ENCODE measurements at regions of chr10 and their contacts with region 1.

Region 1: GRCh38 chr10:20004087-20004523 is 187.9 kb downstream of the PLXDC2 start:
- DNase-seq: peak; percentile 90 to 92 (median 91)
- H3K4me3 ChIP-seq: peak overlapping the region in 2 of 3 experiments; percentile 25 to 47
- H3K4me3 Mint-ChIP-seq: peak overlapping the region; percentile 27 to 66
- H3K27ac ChIP-seq: peak overlapping the region; percentile 97 to 100
- H3K27ac Mint-ChIP-seq: peak overlapping the region; percentile 93 to 99 (median 98)
- H3K4me1 ChIP-seq: peaks cover 56 to 75% of the 10 kb centered on the region in 2 donors
- H3K4me1 Mint-ChIP-seq: peaks cover 72% of the 10 kb centered on the region
- H3K27me3 ChIP-seq: no peaks in the 10 kb centered on the region
- H3K27me3 Mint-ChIP-seq: no peaks in the 10 kb centered on the region
- CTCF ChIP-seq: no peak

Region 2: DNA sequence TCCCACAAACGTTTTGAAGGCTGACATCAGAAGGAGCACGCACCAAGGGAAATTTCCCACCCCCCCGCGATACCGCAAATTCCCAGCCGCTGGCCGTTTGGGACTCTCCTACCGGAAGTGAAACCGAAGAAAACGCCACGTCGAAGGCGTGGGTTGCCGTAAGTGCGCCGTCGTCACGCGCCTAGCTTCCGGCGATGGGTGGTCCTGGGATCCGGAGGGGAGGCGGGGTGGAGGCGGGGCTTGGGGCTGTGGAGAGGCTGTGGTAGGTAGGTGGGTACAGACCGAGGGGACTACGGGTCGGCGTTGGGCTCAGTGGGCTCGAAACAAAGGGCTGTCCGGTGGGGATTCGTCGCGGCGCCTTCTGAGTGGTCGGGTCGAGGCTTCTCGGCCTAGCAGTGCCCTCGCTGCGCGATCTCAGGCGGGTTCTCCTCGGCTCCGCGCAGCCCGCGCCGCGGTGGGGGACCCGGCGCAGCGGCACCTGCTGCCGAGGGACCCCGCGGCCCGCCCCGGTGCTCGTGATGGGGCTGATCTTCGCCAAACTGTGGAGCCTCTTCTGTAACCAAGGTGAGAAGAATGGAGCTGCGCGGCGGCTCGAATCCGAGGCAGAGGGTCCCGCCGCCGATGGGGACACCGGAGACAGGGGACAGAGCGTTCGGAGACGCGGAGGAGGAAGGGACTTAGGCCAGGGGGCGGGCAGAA is 1344.8 kb before region 1 on chr10 and contains the start of gene ARL5B:
- intact Hi-C with region 1: loop called in 1 of 2 experiments (anchors 10 kb)
- DNase-seq: peak; percentile 96 to 100 (median 97)
- H3K4me3 ChIP-seq: peak within 1 kb of the TSS; percentile 84 to 100 (median 97)
- H3K4me3 Mint-ChIP-seq: peak within 1 kb of the TSS; percentile 99 to 100
- H3K27ac ChIP-seq: peak within 1 kb of the TSS; percentile 85 to 96
- H3K27ac Mint-ChIP-seq: peak within 1 kb of the TSS; percentile 97 to 100 (median 98)
- H3K4me1 ChIP-seq: peaks cover 17 to 35% of the 10 kb centered on the region in 2 donors
- H3K4me1 Mint-ChIP-seq: peaks cover 30% of the 10 kb centered on the region
- H3K27me3 ChIP-seq: no peaks in the 10 kb centered on the region
- H3K27me3 Mint-ChIP-seq: no peaks in the 10 kb centered on the region
- CTCF ChIP-seq: no peak
- polyA plus RNA-seq, gene ARL5B: 1.3 to 14.4 (median 1.4) TPM

Region 3: DNA sequence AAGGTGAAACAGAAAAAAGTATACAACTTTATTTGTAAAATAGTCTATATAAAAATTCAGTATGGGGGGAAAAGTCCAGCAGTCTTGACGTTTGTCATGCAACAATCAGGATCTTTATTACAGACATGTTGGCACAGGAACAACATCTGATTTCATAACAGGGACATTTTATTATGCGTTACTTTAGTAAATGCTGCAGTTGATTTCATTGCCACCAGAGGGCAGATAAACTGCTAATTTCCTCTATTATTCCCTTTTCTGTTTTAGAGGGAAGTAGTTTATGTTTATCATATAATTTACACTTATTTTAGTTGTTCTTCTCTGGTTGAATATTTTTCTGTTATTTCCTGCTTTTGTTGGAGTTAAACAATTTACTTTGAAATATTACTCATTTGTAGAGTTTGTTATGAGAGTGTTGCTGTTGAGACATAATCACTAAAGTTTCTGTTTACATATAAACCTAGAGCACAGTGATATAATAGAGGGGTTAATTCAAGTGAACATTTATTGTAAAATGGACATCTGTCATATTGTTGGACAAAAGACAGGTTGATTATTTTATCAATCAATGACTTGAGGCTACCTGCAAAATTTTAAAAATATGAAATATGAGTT is 184.6 kb before region 1 on chr10:
- intact Hi-C with region 1: loop called in 1 of 2 experiments (anchors 5 kb)
- DNase-seq: peak; percentile 76 to 95 (median 81)
- H3K4me3 ChIP-seq: peak overlapping the region; percentile 83 to 93 (median 90)
- H3K4me3 Mint-ChIP-seq: peak overlapping the region; percentile 99
- H3K27ac ChIP-seq: peak overlapping the region in 1 of 2 donors; percentile 93
- H3K27ac Mint-ChIP-seq: peak overlapping the region in 6 of 7 donors; percentile 60 to 98 (median 96)
- H3K4me1 ChIP-seq: peaks cover 27 to 51% of the 10 kb centered on the region in 2 donors
- H3K4me1 Mint-ChIP-seq: peaks cover 52% of the 10 kb centered on the region
- H3K27me3 ChIP-seq: no peaks in the 10 kb centered on the region
- H3K27me3 Mint-ChIP-seq: peaks cover 3 to 7% (median 5%) of the 10 kb centered on the region in 3 donors
- CTCF ChIP-seq: peak; percentile 82

Region 4: DNA sequence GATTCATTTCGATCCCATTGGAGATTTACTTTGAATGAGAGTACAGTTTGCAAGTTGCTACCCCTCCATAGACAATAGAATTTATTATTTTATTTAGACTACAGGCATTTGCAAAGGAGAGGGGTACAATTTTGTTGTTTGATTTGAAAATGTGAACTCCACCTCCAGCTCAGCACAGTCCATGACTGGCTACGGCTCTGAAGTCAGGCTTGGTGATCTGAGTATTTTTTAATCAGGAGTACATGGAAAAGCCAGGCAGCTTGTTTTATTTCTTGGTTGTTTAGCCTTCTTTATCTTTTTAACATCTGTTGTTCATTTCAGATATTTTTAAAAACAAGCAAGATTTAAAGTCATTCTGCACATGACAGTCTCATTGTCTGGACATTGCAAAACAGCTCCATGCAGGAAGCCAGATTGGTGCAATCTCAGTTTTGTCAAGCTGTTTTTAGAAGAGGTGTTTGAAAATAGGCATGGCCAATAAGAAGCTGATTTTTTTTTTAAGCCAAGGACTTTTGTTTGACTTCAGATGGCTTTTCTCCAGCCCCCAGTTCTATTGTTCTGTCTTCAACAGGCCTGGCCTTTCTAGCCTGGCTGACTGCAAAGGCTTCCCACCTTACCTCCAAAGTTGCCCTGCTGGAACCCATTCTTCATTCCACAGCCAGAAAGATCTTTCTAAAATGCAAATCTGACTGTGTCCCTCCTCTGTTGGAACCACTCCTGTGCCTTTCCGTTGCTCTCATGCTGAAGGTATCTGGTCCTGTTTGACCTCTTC is 175.6 kb before region 1 on chr10:
- intact Hi-C with region 1: loop called in 1 of 2 experiments (anchors 5 kb)
- DNase-seq: peak; percentile 49 to 89 (median 52)
- H3K4me3 ChIP-seq: peak overlapping the region in 1 of 3 experiments; percentile 63
- H3K4me3 Mint-ChIP-seq: peak overlapping the region; percentile 20 to 84
- H3K27ac ChIP-seq: peak overlapping the region; percentile 83 to 92
- H3K27ac Mint-ChIP-seq: peak overlapping the region; percentile 93 to 97 (median 94)
- H3K4me1 ChIP-seq: peaks cover 76 to 90% of the 10 kb centered on the region in 2 donors
- H3K4me1 Mint-ChIP-seq: peaks cover 89% of the 10 kb centered on the region
- H3K27me3 ChIP-seq: no peaks in the 10 kb centered on the region
- H3K27me3 Mint-ChIP-seq: no peaks in the 10 kb centered on the region
- CTCF ChIP-seq: no peak

Region 5: DNA sequence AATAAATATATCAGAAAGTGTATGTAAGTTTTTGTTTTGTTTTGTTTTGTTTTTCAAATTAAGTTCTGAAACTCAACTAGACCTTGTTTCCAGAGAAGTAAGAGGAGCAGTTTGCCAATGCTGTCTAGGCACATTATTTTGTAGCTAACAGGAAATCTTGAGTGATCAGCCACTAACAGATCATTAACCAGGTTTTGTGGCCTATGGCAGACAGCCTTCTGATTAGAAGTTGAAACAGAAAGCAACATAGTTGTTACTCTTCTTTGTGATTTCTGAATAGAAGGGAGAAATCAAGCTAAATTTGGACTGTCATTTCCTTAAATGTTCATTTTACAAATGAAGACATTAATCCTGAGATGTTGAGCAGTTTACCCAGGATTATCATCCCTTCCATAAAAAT is 45.3 kb before region 1 on chr10:
- intact Hi-C with region 1: no loop called
- DNase-seq: no peak
- H3K4me3 ChIP-seq: no peak overlapping the region
- H3K4me3 Mint-ChIP-seq: no peak overlapping the region
- H3K27ac ChIP-seq: peak overlapping the region in 1 of 2 donors; percentile 35
- H3K27ac Mint-ChIP-seq: peak overlapping the region in 4 of 7 donors; percentile 3 to 28 (median 4)
- H3K4me1 ChIP-seq: peaks cover 8 to 12% of the 10 kb centered on the region in 2 donors
- H3K4me1 Mint-ChIP-seq: peaks cover 31% of the 10 kb centered on the region
- H3K27me3 ChIP-seq: no peaks in the 10 kb centered on the region
- H3K27me3 Mint-ChIP-seq: no peaks in the 10 kb centered on the region
- CTCF ChIP-seq: no peak

Region 6: GRCh38 chr10:20128811-20129210 is 124.7 kb after region 1 on chr10:
- intact Hi-C with region 1: loop called in 1 of 2 experiments (anchors 2 kb)
- DNase-seq: peak; percentile 79 to 92 (median 92)
- H3K4me3 ChIP-seq: no peak overlapping the region
- H3K4me3 Mint-ChIP-seq: no peak overlapping the region
- H3K27ac ChIP-seq: peak overlapping the region in 1 of 2 donors; percentile 74
- H3K27ac Mint-ChIP-seq: peak overlapping the region; percentile 71 to 96 (median 92)
- H3K4me1 ChIP-seq: peaks cover 10 to 24% of the 10 kb centered on the region in 2 donors
- H3K4me1 Mint-ChIP-seq: peaks cover 24% of the 10 kb centered on the region
- H3K27me3 ChIP-seq: no peaks in the 10 kb centered on the region
- H3K27me3 Mint-ChIP-seq: no peaks in the 10 kb centered on the region
- CTCF ChIP-seq: no peak